AG04449 (cell line): ENCODE measurements at regions of chr1 and their contacts with region 1.

Region 1: GRCh38 chr1:74748960-74749359 is 16.0 kb downstream of the TYW3 start:
- DNase-seq: no peak
- H3K4me3 ChIP-seq: no peak overlapping the region
- CTCF ChIP-seq: no peak

Region 2: GRCh38 chr1:74689621-74690363 is 59.2 kb before region 1 on chr1:
- CTCF ChIA-PET with region 1: no interaction called
- POLR2A ChIA-PET with region 1: no interaction called
- DNase-seq: no peak
- H3K4me3 ChIP-seq: no peak overlapping the region
- CTCF ChIP-seq: peak; percentile 71

Region 3: GRCh38 chr1:74733604-74734484 is 15.1 kb before region 1 on chr1:
- CTCF ChIA-PET with region 1: interaction called, 16 read pairs
- POLR2A ChIA-PET with region 1: no interaction called
- DNase-seq: no peak
- H3K4me3 ChIP-seq: peak overlapping the region; percentile 100
- CTCF ChIP-seq: peak; percentile 74